Activated CD4-positive, alpha-beta T cell treated with anti-CD3 and anti-CD28 coated beads, Interleukin-2, amount 10 ng/mL, durations not matched to agents 24 days and 14 days (primary cell): ENCODE measurements at regions of chr19 and their contacts with region 1.

Region 1: GRCh38 chr19:45405435-45406225 is 761 bp upstream of the PPP1R13L start:
- DNase-seq: peak; percentile 95
- H3K4me3 Mint-ChIP-seq: peak overlapping the region; percentile 97
- H3K27ac Mint-ChIP-seq: peak overlapping the region; percentile 89
- H3K4me1 Mint-ChIP-seq: peaks cover 36% of the 10 kb centered on the region
- H3K27me3 Mint-ChIP-seq: peaks cover 12% of the 10 kb centered on the region

Region 2: GRCh38 chr19:43526884-43527859 is 1878.5 kb before region 1 on chr19 and contains the start of gene ETHE1:
- intact Hi-C with region 1: loop called (anchors 5 kb)
- DNase-seq: peak; percentile 96
- H3K4me3 Mint-ChIP-seq: peak within 1 kb of the TSS; percentile 84
- H3K27ac Mint-ChIP-seq: peak within 1 kb of the TSS; percentile 97
- H3K4me1 Mint-ChIP-seq: peaks cover 26% of the 10 kb centered on the region
- H3K27me3 Mint-ChIP-seq: no peaks in the 10 kb centered on the region
- total RNA-seq, gene ETHE1: 59.3 and 59.7 TPM in 2 replicates

Region 3: GRCh38 chr19:45178262-45179071 is 227.2 kb before region 1 on chr19 and contains the start of gene BLOC1S3:
- intact Hi-C with region 1: loop called (anchors 1 kb)
- DNase-seq: peak; percentile 100
- H3K4me3 Mint-ChIP-seq: peak within 1 kb of the TSS; percentile 88
- H3K27ac Mint-ChIP-seq: peak within 1 kb of the TSS; percentile 93
- H3K4me1 Mint-ChIP-seq: peaks cover 20% of the 10 kb centered on the region
- H3K27me3 Mint-ChIP-seq: no peaks in the 10 kb centered on the region
- total RNA-seq, gene BLOC1S3: 10.1 and 12.2 TPM in 2 replicates

Region 4: DNA sequence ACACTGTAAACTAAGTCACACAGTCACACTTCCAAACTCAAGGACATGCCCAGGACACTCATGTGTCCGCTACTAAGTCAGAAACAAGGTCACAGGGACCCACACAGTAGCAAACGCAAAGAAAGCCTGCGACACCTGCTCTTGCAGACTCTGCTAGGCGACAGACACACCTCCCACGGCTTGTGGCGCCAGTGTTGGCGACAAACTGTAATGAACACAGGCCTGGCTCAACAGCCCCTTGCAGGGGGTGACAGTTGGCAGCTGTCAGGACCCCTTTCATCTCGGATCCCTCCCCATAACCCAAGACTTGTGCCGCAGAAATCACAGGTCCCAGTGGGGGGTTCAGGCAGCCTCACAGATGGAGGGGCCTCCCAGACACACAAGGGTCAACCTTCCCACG is 83.3 kb before region 1 on chr19:
- intact Hi-C with region 1: no loop called
- DNase-seq: no peak
- H3K4me3 Mint-ChIP-seq: no peak overlapping the region
- H3K27ac Mint-ChIP-seq: no peak overlapping the region
- H3K4me1 Mint-ChIP-seq: peaks cover 3% of the 10 kb centered on the region
- H3K27me3 Mint-ChIP-seq: peaks cover 29% of the 10 kb centered on the region

Region 5: DNA sequence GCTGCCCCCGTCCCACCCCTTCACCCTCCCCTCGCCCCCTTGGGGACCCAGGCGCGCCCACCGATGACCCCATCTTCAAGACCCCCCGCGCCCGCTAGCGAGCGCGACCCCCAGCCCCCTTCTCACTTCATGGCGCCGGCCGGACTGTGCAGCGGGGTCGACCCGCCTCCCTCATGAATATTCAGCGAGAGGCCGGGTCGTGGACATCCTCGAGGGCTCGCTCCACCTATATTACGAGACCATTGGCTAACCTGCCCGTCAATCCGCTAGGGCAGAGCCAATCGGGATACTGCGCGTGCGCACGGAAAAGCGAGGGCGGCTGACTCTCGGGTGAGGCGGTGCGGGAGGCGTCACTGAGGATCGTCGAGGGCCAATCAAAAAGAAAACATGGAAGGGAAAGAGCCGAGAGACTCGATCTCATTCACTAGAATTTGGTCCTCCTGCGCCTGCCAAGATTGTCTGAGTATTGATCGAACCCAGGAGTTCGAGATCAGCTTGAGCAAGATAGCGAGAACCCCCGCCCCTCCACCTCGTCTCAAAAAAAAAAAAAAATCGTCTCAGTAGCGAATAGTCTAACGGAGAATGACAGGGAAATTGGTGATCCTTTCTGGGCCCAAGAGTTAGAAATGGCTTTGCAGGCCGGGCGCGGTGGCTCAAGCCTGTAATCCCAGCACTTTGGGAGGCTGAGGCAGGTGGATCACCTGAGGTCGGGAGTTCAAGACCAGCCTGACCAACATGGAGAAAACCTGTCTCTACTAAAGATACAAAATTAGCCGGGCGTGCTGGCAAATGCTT is 35.0 kb before region 1 on chr19 and contains the start of gene ERCC2:
- intact Hi-C with region 1: loop called (anchors 1 kb)
- DNase-seq: peak; percentile 100
- H3K4me3 Mint-ChIP-seq: peak within 1 kb of the TSS; percentile 91
- H3K27ac Mint-ChIP-seq: peak within 1 kb of the TSS; percentile 99
- H3K4me1 Mint-ChIP-seq: peaks cover 17% of the 10 kb centered on the region
- H3K27me3 Mint-ChIP-seq: no peaks in the 10 kb centered on the region
- total RNA-seq, gene ERCC2: 30.9 and 33.6 TPM in 2 replicates

Region 6: GRCh38 chr19:45423589-45424190 is 18.1 kb after region 1 on chr19 and contains the start of gene ERCC1:
- intact Hi-C with region 1: loop called (anchors 1 kb)
- DNase-seq: peak; percentile 96
- H3K4me3 Mint-ChIP-seq: peak within 1 kb of the TSS; percentile 100
- H3K27ac Mint-ChIP-seq: peak within 1 kb of the TSS; percentile 98
- H3K4me1 Mint-ChIP-seq: peaks cover 55% of the 10 kb centered on the region
- H3K27me3 Mint-ChIP-seq: peaks cover 7% of the 10 kb centered on the region
- total RNA-seq, gene ERCC1: 123 and 124 TPM in 2 replicates

Region 7: GRCh38 chr19:45478454-45479238 is 73.0 kb after region 1 on chr19:
- intact Hi-C with region 1: loop called (anchors 1 kb)
- DNase-seq: peak; percentile 97
- H3K4me3 Mint-ChIP-seq: peak overlapping the region; percentile 68
- H3K27ac Mint-ChIP-seq: peak overlapping the region; percentile 91
- H3K4me1 Mint-ChIP-seq: peaks cover 29% of the 10 kb centered on the region
- H3K27me3 Mint-ChIP-seq: peaks cover 32% of the 10 kb centered on the region